Activated CD4-positive, alpha-beta memory T cell treated with anti-CD3 and anti-CD28 coated beads, Interleukin-2, amount 10 ng/mL, durations not matched to agents 7 days and 5 days (primary cell): ENCODE measurements at regions of chr2 and their contacts with region 1.

Region 1: DNA sequence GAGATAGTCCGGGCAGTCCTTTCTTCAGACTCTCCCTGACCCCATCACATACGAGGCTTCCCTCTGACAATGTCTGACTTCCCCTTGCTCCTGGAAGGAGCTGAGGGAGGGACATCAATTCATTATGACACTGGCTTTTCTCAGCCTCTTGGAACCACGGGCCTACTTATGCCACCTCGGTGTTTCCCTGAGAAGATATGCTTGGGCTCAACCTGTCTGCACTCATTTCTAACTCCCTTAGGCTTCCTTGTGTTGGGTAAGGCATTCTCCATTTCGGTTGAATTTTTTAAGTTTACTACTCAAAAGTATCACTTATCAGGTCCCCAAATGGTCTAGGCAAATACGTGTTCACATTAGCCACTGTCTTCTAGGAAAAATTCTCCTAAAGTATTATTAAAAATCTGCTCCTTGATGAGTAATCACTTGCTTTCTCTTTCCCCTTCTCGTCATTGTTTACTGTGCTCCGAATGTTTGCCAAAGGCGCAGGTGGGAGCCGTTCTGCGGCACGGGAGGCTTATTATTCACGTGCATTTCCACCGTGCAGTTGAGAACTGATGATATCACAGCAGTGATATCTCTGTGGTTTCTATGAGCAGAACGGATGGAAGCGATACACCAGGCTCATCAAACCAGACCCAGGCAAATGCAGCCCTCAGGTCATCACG is 33.1 kb downstream of the ARL4C start:
- DNase-seq: peak; percentile 78
- H3K4me3 Mint-ChIP-seq: peak overlapping the region; percentile 58
- H3K27ac Mint-ChIP-seq: peak overlapping the region; percentile 86
- H3K4me1 Mint-ChIP-seq: peaks cover 61% of the 10 kb centered on the region
- H3K27me3 Mint-ChIP-seq: no peaks in the 10 kb centered on the region

Region 2: DNA sequence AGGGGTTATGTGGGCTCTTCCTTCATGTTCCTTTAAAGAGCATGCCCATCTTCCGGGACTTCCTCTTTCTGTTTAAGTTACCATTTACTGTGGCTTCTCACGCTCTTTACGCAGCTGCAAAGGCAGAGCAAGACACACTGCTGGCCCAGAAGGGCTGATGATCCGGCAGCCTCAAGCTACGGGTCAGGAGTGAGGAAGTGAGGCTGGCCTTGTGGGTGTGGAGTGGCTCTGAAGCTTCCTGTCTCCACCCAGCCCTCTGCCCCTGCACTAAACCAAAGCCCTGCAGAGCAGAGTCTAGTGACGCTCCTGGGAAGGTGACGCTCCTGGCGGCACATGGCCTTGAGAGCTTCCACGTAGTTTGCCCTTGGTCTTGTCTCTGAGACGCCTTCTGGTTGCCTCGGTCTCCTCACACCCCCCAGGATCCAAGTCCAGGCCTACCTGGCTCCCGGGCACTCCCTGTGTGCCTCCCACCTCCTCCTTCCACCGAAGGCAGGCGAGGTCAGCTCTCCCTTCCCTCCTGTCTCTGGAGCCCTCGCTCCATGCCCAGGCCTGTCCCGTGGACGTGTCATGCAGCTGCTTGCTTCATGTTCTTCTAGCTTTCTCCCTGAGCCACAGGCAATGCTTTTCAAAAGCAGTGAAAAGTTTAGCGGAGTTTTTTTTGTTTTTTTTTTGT is 17.2 kb before region 1 on chr2:
- CTCF ChIA-PET with region 1: interaction called, 5 read pairs
- POLR2A ChIA-PET with region 1: interaction called, 82 read pairs
- DNase-seq: peak; percentile 93
- H3K4me3 Mint-ChIP-seq: peak overlapping the region; percentile 55
- H3K27ac Mint-ChIP-seq: peak overlapping the region; percentile 99
- H3K4me1 Mint-ChIP-seq: peaks cover 82% of the 10 kb centered on the region
- H3K27me3 Mint-ChIP-seq: no peaks in the 10 kb centered on the region

Region 3: DNA sequence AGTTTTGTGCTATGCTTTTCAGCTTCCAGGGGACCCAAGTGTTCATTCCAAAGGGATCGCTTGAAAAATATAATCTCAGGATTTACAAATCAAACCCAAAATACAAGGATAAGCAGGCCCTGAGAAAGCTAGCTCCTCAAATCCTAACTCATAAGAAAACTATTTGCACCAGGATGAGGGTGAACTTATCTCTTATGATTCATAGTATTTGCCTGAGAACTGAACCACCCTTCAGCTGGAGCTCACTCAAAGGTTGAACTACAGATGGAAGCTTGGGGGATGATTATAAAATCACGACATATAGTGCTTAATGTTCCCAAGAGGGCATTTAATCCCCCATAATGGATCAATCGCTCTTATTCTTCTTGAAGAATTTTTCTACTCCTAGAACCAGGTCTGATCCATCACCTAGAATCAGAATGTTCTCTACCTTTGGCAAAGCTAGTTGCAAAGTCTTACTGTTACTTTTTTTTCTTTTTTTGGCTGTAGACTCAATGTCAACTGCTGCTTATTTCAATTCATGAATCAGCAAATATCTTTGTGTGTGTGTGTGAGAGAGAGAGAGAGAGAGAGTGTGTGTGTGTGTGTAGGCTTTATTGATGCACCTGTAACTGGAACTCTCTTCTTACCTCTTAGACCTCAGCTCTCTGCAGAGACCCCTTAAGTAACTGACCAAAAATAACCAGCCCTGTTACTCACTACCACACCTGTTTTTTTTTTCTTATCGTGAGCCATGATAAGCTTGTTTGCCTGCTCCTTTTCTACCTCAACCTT is 11.7 kb before region 1 on chr2:
- CTCF ChIA-PET with region 1: interaction called, 6 read pairs
- POLR2A ChIA-PET with region 1: interaction called, 82 read pairs
- DNase-seq: no peak
- H3K4me3 Mint-ChIP-seq: peak overlapping the region; percentile 72
- H3K27ac Mint-ChIP-seq: peak overlapping the region; percentile 81
- H3K4me1 Mint-ChIP-seq: peaks cover 83% of the 10 kb centered on the region
- H3K27me3 Mint-ChIP-seq: no peaks in the 10 kb centered on the region

Region 4: GRCh38 chr2:234478121-234478858 is 14.5 kb after region 1 on chr2:
- CTCF ChIA-PET with region 1: interaction called, 11 read pairs
- POLR2A ChIA-PET with region 1: interaction called, 25 read pairs
- DNase-seq: no peak
- H3K4me3 Mint-ChIP-seq: no peak overlapping the region
- H3K27ac Mint-ChIP-seq: peak overlapping the region; percentile 80
- H3K4me1 Mint-ChIP-seq: peaks cover 74% of the 10 kb centered on the region
- H3K27me3 Mint-ChIP-seq: no peaks in the 10 kb centered on the region

Region 5: GRCh38 chr2:234483568-234484251 is 20.0 kb after region 1 on chr2:
- CTCF ChIA-PET with region 1: interaction called, 11 read pairs
- POLR2A ChIA-PET with region 1: interaction called, 143 read pairs
- DNase-seq: peak; percentile 90
- H3K4me3 Mint-ChIP-seq: peak overlapping the region; percentile 59
- H3K27ac Mint-ChIP-seq: peak overlapping the region; percentile 88
- H3K4me1 Mint-ChIP-seq: peaks cover 93% of the 10 kb centered on the region
- H3K27me3 Mint-ChIP-seq: no peaks in the 10 kb centered on the region